ENCODE measurements at regions of chr3 and their contacts with region 1.

Region 1: DNA sequence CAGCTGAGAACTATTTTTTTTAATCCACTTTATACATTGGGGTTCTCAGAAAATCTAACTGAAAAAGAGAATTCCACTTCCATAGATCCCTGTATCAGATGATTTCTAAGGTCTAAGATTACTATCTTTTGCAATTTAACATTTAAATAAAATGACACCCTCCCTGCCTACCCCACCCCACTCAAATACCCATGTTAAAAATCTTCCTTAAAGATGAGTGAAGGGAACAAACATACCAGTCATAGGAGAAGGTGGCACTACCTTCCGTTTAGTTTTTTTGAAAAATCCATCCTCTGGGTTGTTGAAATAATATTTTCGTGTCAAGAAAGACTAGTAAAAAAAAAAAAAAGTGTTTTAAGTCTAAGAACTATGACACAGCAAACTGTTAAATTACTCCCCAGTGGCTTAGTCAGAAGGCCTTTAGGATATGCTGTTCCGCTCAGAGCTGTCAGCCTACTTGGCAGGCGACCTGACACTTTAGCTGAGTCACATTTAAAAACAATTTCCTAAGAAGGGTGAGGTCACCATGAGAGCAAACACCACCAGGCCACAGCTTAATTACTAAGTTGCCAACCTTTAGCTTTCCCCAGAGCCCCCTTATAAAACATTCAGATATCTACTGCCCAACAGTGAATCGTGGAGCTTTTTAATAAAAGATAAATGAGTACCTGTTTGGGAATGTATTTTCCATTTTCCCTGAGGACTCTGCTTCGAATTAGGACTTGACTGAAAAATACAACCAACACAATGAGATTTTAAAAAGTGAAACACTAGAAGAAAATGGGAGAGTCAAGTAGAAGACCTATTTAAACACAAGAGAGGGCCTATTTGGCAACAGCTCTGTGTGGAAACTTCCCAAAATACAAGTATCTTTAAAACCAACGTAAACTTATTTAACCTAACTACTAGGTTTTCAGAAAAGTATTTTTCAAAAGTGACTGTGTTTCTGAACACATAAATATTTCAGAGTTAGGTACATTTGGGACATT is 9.6 kb downstream of the EMC3 start:
- DNase-seq: no peak
- ATAC-seq: no peak
- H3K4me3 ChIP-seq: no peak overlapping the region
- H3K4me3 Mint-ChIP-seq: no peak overlapping the region
- H3K27ac ChIP-seq: no peak overlapping the region
- H3K27ac Mint-ChIP-seq: no peak overlapping the region
- H3K4me1 ChIP-seq: no peaks in the 10 kb centered on the region
- H3K4me1 Mint-ChIP-seq: peaks cover 8 to 10% (median 10%) of the 10 kb centered on the region in 3 donors
- H3K27me3 ChIP-seq: no peaks in the 10 kb centered on the region
- H3K27me3 Mint-ChIP-seq: no peaks in the 10 kb centered on the region

Region 2: DNA sequence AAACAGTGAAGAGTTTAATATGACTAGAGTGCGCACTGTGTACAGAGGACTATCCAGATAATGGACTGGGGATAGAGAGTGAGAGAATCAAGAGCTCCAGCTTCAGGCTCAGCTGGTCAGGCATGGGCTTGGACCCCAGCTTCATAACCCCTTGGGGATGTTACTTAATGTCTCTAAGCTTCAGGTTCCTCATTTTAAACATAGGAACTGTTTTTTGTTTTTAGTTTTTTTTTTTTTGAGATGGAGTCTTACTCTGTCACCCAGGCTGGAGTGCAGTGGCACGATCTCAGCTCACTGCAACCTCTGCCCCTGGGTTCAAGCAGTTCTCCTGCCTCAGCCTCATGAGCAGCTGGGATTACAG is 255.3 kb before region 1 on chr3:
- CTCF ChIA-PET with region 1: interaction called in 1 of 2 experiments, 16 read pairs
- POLR2A ChIA-PET with region 1: no interaction called
- DNase-seq: no peak
- ATAC-seq: no peak
- H3K4me3 ChIP-seq: no peak overlapping the region
- H3K4me3 Mint-ChIP-seq: no peak overlapping the region
- H3K27ac ChIP-seq: no peak overlapping the region
- H3K27ac Mint-ChIP-seq: no peak overlapping the region
- H3K4me1 ChIP-seq: peaks cover 2 to 10% of the 10 kb centered on the region in 2 experiments
- H3K4me1 Mint-ChIP-seq: peaks cover 12 to 20% (median 16%) of the 10 kb centered on the region in 3 donors
- H3K27me3 ChIP-seq: peaks cover 0 to 2% of the 10 kb centered on the region in 2 experiments
- H3K27me3 Mint-ChIP-seq: peaks cover 0 to 3% of the 10 kb centered on the region in 2 donors